CD8-positive, alpha-beta T cell (primary cell): ENCODE measurements at regions of chr5 and their contacts with region 1.

Region 1: DNA sequence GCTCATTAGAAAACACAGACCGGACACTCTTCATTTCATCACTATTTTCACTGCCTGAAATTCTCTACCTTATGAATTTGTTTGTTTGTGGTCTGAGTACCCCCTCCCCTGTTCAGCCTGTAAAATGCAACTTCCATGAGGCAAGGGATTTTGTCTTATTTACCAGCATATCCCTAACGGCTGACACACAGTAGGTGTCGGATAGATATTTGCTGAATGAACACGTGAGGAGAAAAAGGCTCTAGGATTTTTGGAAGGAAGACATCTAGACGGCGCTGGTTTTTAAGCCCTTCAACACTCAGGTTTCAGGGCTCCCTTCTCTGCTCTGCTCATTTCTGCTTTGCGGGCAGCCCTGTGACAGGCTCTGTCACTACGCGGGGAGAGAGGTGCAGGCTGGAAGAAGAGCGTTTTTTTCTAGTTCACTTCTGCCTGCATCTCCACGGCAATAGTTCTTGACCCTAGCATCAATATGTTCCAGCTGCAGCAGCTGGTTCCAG is 41.0 kb downstream of the KCNMB1 start:
- DNase-seq: peak in 1 of 9 experiments; percentile 23
- ATAC-seq: no peak
- H3K4me3 ChIP-seq: no peak overlapping the region
- H3K4me3 Mint-ChIP-seq: no peak overlapping the region
- H3K27ac ChIP-seq: no peak overlapping the region
- H3K27ac Mint-ChIP-seq: no peak overlapping the region
- H3K4me1 ChIP-seq: no peaks in the 10 kb centered on the region
- H3K4me1 Mint-ChIP-seq: peaks cover 1% of the 10 kb centered on the region
- H3K27me3 ChIP-seq: peaks cover 0 to 4% of the 10 kb centered on the region in 2 experiments
- H3K27me3 Mint-ChIP-seq: peaks cover 25% of the 10 kb centered on the region
- CTCF ChIP-seq: peak; percentile 28

Region 2: GRCh38 chr5:170420780-170421412 is 72.7 kb after region 1 on chr5:
- CTCF ChIA-PET with region 1: no interaction called
- POLR2A ChIA-PET with region 1: no interaction called
- intact Hi-C with region 1: loop called in 1 of 2 experiments (anchors 5 kb)
- DNase-seq: peak; percentile 22 to 75 (median 48)
- ATAC-seq: peak; percentile 58
- H3K4me3 ChIP-seq: no peak overlapping the region
- H3K4me3 Mint-ChIP-seq: no peak overlapping the region
- H3K27ac ChIP-seq: no peak overlapping the region
- H3K27ac Mint-ChIP-seq: no peak overlapping the region
- H3K4me1 ChIP-seq: peaks cover 18% of the 10 kb centered on the region
- H3K4me1 Mint-ChIP-seq: peaks cover 25% of the 10 kb centered on the region
- H3K27me3 ChIP-seq: no peaks in the 10 kb centered on the region
- H3K27me3 Mint-ChIP-seq: no peaks in the 10 kb centered on the region
- CTCF ChIP-seq: peak; percentile 79